ENCODE measurements at regions of chr9 and their contacts with region 1.

Region 1: GRCh38 chr9:73683862-73684591 is 532.4 kb downstream of the ANXA1 start:
- DNase-seq: no peak
- H3K4me3 ChIP-seq: no peak overlapping the region
- H3K4me3 Mint-ChIP-seq: no peak overlapping the region
- H3K27ac Mint-ChIP-seq: no peak overlapping the region
- H3K4me1 ChIP-seq: no peaks in the 10 kb centered on the region
- H3K4me1 Mint-ChIP-seq: no peaks in the 10 kb centered on the region
- H3K27me3 ChIP-seq: no peaks in the 10 kb centered on the region
- H3K27me3 Mint-ChIP-seq: no peaks in the 10 kb centered on the region
- CTCF ChIP-seq: peak; percentile 17 to 18

Region 2: DNA sequence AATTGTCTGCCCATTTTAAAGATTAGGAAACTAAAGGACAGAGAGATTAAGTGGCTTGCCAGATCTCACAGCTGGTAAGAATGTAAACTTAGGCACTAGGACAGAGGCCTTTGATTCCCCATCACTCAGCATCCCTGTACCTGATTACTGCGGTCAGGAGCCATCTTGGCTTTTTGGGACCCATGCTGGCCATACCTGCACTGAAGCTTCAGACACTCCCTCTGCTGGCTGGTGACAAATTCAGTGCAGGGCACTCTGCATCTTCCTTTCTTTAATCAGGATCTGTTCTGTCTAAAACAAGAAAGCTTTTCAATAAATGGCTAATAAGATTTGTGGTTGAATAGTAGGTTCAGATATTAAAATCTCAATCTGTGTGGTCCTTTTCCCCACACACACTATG is 597.6 kb after region 1 on chr9:
- CTCF ChIA-PET with region 1: no interaction called
- POLR2A ChIA-PET with region 1: no interaction called
- intact Hi-C with region 1: loop called (anchors 1 kb)
- DNase-seq: peak in 1 of 2 experiments; percentile 1
- H3K4me3 ChIP-seq: no peak overlapping the region
- H3K4me3 Mint-ChIP-seq: no peak overlapping the region
- H3K27ac Mint-ChIP-seq: no peak overlapping the region
- H3K4me1 ChIP-seq: no peaks in the 10 kb centered on the region
- H3K4me1 Mint-ChIP-seq: no peaks in the 10 kb centered on the region
- H3K27me3 ChIP-seq: no peaks in the 10 kb centered on the region
- H3K27me3 Mint-ChIP-seq: no peaks in the 10 kb centered on the region
- CTCF ChIP-seq: no peak

Region 3: DNA sequence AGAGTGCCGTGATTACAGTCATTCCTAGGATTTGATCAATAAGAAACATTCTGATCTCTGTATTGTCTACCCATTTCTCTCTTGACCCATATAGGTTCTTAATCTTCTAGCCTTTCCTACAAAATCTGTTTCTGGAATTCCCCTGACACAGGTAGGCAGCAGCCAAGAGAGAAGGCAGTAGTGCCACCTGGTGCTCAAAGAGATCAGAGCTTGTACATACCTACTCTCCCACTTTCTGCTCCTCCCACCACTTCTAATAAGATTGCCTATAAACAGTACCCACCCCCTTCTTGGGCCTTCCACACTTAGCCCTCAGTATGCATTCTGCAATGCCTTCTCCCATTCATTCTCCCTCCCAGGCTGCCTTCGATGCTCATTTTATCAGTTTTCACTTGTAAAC is 695.7 kb after region 1 on chr9:
- CTCF ChIA-PET with region 1: no interaction called
- POLR2A ChIA-PET with region 1: no interaction called
- intact Hi-C with region 1: loop called (anchors 1 kb)
- DNase-seq: peak; percentile 13 to 24
- H3K4me3 ChIP-seq: no peak overlapping the region
- H3K4me3 Mint-ChIP-seq: no peak overlapping the region
- H3K27ac Mint-ChIP-seq: no peak overlapping the region
- H3K4me1 ChIP-seq: no peaks in the 10 kb centered on the region
- H3K4me1 Mint-ChIP-seq: no peaks in the 10 kb centered on the region
- H3K27me3 ChIP-seq: no peaks in the 10 kb centered on the region
- H3K27me3 Mint-ChIP-seq: no peaks in the 10 kb centered on the region
- CTCF ChIP-seq: peak in 1 of 2 experiments; percentile 40

Region 4: DNA sequence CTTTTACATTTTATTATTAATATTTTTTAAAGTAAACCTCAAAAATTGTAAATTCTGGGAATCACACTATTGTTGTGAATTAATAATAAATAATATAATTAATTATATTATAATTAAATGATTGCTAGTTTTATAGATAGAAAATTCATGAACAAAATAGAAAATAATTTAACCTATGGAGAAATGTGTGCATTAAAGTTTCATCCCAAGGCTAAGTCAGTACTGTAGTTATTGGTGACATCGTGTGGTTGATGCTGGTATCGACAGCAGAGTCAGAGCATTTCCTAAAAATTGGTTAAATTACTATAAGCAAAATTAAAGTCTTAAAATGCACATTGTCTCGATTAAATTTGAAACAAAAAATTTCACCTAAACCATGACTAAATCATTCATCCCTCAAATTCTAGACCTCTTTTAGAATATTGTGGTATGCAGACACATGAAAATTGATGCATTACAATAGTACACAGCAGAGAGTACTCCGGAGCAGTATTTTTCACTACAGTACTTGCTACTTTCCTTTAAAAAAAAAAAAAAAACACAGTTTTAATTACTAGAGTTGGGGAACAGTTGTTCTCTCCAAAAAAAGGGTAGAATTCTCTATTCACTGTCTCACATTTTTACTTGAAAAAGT is 887.0 kb after region 1 on chr9:
- CTCF ChIA-PET with region 1: no interaction called
- POLR2A ChIA-PET with region 1: no interaction called
- intact Hi-C with region 1: loop called (anchors 5 kb)
- DNase-seq: no peak
- H3K4me3 ChIP-seq: no peak overlapping the region
- H3K4me3 Mint-ChIP-seq: no peak overlapping the region
- H3K27ac Mint-ChIP-seq: no peak overlapping the region
- H3K4me1 ChIP-seq: no peaks in the 10 kb centered on the region
- H3K4me1 Mint-ChIP-seq: no peaks in the 10 kb centered on the region
- H3K27me3 ChIP-seq: no peaks in the 10 kb centered on the region
- H3K27me3 Mint-ChIP-seq: no peaks in the 10 kb centered on the region
- CTCF ChIP-seq: peak in 1 of 2 experiments; percentile 19